Caco-2 (cell line): ENCODE measurements at regions of chr3 and their contacts with region 1.

Region 1: GRCh38 chr3:190012314-190012782 is 108.3 kb downstream of the P3H2 start:
- DNase-seq: peak in 1 of 2 experiments; percentile 53
- H3K4me3 ChIP-seq: no peak overlapping the region
- H3K4me3 Mint-ChIP-seq: peak overlapping the region; percentile 43
- H3K27ac Mint-ChIP-seq: peak overlapping the region; percentile 78
- H3K4me1 ChIP-seq: peaks cover 55% of the 10 kb centered on the region
- H3K4me1 Mint-ChIP-seq: peaks cover 53% of the 10 kb centered on the region
- H3K27me3 ChIP-seq: no peaks in the 10 kb centered on the region
- H3K27me3 Mint-ChIP-seq: no peaks in the 10 kb centered on the region
- CTCF ChIP-seq: no peak

Region 2: DNA sequence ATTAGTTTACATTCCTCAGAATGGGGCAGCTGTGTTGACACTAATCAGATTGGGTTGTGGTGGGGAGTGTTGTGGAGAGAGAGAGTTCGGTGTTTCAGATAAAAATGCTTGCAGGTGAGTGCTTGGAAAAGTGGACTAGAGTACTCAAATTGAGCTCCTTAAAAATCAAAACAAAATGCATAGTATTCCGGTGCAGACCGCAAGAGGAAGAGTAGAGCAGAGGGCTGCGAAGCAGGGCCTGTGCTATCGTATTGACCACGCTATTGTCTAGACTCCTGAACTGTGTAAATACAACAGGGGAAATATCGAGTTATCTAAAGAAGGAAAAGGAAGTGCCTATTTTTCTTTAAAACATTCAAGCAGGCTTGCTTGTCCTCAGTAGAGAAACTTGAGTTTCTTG is 221.7 kb before region 1 on chr3:
- CTCF ChIA-PET with region 1: no interaction called
- POLR2A ChIA-PET with region 1: no interaction called
- intact Hi-C with region 1: no loop called
- DNase-seq: peak in 1 of 2 experiments; percentile 14
- H3K4me3 ChIP-seq: no peak overlapping the region
- H3K4me3 Mint-ChIP-seq: peak overlapping the region; percentile 61
- H3K27ac Mint-ChIP-seq: no peak overlapping the region
- H3K4me1 ChIP-seq: peaks cover 4% of the 10 kb centered on the region; the same call in 1 of the 2 replicates
- H3K4me1 Mint-ChIP-seq: peaks cover 7% of the 10 kb centered on the region
- H3K27me3 ChIP-seq: no peaks in the 10 kb centered on the region
- H3K27me3 Mint-ChIP-seq: no peaks in the 10 kb centered on the region
- CTCF ChIP-seq: no peak

Region 3: DNA sequence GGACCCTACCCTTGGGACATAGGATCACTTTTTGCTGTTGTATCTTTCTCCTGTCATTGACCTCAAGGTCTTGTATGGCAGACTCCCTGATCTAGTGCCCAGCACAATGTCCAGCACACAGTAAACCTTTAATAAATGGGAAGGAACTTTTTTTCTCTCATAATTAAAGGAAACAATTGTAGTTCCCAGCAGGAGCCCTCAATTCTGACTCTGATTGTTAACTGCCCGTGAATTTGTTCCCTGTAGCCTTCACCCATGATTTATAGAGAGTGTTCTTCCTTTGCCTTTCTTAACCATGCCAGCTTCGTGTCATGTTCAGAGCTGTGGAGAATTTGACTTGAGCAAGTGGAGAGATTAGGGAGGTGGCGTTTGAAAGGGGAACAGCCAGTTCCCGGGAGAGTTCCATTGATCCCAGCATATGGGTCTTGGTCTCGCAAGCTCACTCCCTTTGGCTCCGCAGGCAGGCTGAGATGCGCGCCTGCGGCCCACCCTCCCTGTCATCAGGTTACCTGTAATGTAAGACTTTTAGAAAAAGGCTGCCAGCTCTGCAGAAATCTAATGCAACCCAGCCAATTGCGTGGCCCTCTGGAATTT is 198.6 kb before region 1 on chr3:
- CTCF ChIA-PET with region 1: no interaction called
- POLR2A ChIA-PET with region 1: no interaction called
- intact Hi-C with region 1: no loop called
- DNase-seq: no peak
- H3K4me3 ChIP-seq: no peak overlapping the region
- H3K4me3 Mint-ChIP-seq: no peak overlapping the region
- H3K27ac Mint-ChIP-seq: no peak overlapping the region
- H3K4me1 ChIP-seq: no peaks in the 10 kb centered on the region
- H3K4me1 Mint-ChIP-seq: no peaks in the 10 kb centered on the region
- H3K27me3 ChIP-seq: no peaks in the 10 kb centered on the region
- H3K27me3 Mint-ChIP-seq: no peaks in the 10 kb centered on the region
- CTCF ChIP-seq: no peak

Region 4: GRCh38 chr3:189947068-189947617 is 65.2 kb before region 1 on chr3:
- CTCF ChIA-PET with region 1: no interaction called
- POLR2A ChIA-PET with region 1: no interaction called
- intact Hi-C with region 1: no loop called
- DNase-seq: no peak
- H3K4me3 ChIP-seq: no peak overlapping the region
- H3K4me3 Mint-ChIP-seq: no peak overlapping the region
- H3K27ac Mint-ChIP-seq: no peak overlapping the region
- H3K4me1 ChIP-seq: peaks cover 5% of the 10 kb centered on the region; the same call in 1 of the 2 replicates
- H3K4me1 Mint-ChIP-seq: peaks cover 7% of the 10 kb centered on the region
- H3K27me3 ChIP-seq: no peaks in the 10 kb centered on the region
- H3K27me3 Mint-ChIP-seq: no peaks in the 10 kb centered on the region
- CTCF ChIP-seq: no peak

Region 5: DNA sequence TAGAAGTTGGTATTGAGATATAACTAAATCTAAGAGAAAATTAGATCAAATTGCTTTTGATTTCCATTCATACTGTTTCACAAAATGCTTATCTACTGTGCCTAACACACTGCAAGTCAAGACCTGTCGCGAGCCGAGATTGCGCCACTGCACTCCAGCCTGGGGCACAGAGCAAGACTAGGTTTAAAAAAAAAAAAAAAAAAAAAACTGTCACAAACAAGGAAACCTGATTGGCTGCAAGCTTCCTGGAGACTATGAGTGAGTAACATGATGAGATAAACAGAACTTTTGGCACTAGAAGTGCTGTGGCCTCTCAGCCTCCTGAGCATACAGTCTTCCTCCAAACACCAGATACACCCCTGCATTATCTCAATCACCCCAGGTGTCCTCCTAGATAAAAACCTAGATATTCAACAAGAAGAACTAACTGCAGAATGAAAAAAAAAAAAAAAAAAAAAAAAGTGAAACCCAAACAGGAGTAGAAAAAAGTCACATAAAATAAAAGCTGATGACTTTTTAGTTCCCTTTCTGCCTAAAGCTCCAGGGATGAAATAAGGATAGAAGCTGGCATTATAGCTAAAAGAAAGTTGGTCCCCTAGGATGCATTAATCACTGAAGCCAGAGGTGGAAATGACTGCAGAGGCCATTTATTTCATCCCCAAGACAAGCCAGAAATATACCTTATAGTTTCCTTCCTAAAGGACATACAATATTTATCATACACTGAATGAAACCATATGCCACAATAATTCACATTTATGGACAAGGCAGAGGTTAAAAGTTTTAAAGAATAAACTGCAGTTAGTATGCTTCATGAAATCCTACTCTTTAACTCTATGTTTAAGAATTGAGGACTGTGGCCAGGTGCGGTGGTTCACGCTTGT is 25.9 kb after region 1 on chr3:
- CTCF ChIA-PET with region 1: no interaction called
- POLR2A ChIA-PET with region 1: interaction called, 4 read pairs
- intact Hi-C with region 1: loop called (anchors 2 kb)
- DNase-seq: peak; percentile 76 to 79
- H3K4me3 ChIP-seq: no peak overlapping the region
- H3K4me3 Mint-ChIP-seq: peak overlapping the region; percentile 31
- H3K27ac Mint-ChIP-seq: peak overlapping the region; percentile 46
- H3K4me1 ChIP-seq: peaks cover 9% of the 10 kb centered on the region
- H3K4me1 Mint-ChIP-seq: peaks cover 18% of the 10 kb centered on the region
- H3K27me3 ChIP-seq: no peaks in the 10 kb centered on the region
- H3K27me3 Mint-ChIP-seq: no peaks in the 10 kb centered on the region
- CTCF ChIP-seq: no peak

Region 6: GRCh38 chr3:190197346-190197763 is 185.0 kb after region 1 on chr3:
- CTCF ChIA-PET with region 1: no interaction called
- POLR2A ChIA-PET with region 1: no interaction called
- intact Hi-C with region 1: loop called (anchors 1 kb)
- DNase-seq: peak in 1 of 2 experiments; percentile 19
- H3K4me3 ChIP-seq: no peak overlapping the region
- H3K4me3 Mint-ChIP-seq: peak overlapping the region; percentile 22
- H3K27ac Mint-ChIP-seq: no peak overlapping the region
- H3K4me1 ChIP-seq: peaks cover 14% of the 10 kb centered on the region; the same call in 1 of the 2 replicates
- H3K4me1 Mint-ChIP-seq: peaks cover 14% of the 10 kb centered on the region
- H3K27me3 ChIP-seq: no peaks in the 10 kb centered on the region
- H3K27me3 Mint-ChIP-seq: no peaks in the 10 kb centered on the region
- CTCF ChIP-seq: no peak